ENCODE measurements at regions of chr4 and their contacts with region 1.

Region 1: GRCh38 chr4:42519803-42520417 is 122.6 kb downstream of the SHISA3 start:
- DNase-seq: peak; percentile 68
- ATAC-seq: peak; percentile 70
- H3K4me3 Mint-ChIP-seq: no peak overlapping the region
- H3K27ac Mint-ChIP-seq: no peak overlapping the region
- H3K4me1 Mint-ChIP-seq: peaks cover 8% of the 10 kb centered on the region
- H3K27me3 Mint-ChIP-seq: no peaks in the 10 kb centered on the region
- CTCF ChIP-seq: peak; percentile 78

Region 2: DNA sequence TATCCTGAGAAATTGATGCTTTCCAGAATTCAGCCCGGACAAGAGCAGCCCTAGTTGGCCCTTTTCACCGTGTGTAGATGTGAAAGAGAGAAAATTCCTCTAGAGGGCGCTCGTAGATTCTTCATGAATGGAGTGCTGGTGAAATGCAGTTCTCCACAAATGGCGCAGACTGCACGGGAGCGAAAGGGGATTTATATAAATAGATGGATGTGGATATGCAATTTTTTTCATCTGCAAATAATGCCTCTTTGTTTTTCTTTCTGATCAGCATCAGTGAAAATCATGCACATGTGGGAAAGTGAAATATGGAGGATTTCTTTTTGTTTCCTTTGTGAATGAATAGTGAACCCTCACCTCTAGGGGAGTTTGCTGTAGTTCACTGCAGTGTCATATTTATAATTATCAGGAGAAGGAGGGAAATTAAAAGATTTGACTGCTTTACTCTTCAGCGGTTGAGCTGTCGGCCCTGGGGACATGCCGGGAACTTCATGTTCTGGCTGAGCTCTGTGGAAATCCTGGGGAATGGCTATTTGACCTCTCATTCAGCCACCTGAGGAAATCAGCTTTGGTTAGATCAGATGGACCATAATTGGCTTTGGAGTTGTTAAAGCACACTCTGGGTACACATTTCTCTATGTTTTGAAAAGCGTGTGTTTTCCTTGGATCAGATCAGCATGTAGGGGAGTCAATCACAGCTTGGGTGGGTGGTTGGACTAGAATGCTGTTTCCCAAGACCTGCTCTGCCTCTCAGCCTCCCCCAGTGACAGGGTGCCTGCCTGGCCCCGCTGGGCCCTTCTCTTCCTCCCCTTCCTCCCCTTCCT is 237.6 kb before region 1 on chr4:
- CTCF ChIA-PET with region 1: interaction called, 56 read pairs
- POLR2A ChIA-PET with region 1: no interaction called
- intact Hi-C with region 1: loop called (anchors 5 kb)
- DNase-seq: peak; percentile 52
- ATAC-seq: peak; percentile 68
- H3K4me3 Mint-ChIP-seq: no peak overlapping the region
- H3K27ac Mint-ChIP-seq: no peak overlapping the region
- H3K4me1 Mint-ChIP-seq: peaks cover 8% of the 10 kb centered on the region
- H3K27me3 Mint-ChIP-seq: peaks cover 22% of the 10 kb centered on the region
- CTCF ChIP-seq: peak; percentile 68

Region 3: DNA sequence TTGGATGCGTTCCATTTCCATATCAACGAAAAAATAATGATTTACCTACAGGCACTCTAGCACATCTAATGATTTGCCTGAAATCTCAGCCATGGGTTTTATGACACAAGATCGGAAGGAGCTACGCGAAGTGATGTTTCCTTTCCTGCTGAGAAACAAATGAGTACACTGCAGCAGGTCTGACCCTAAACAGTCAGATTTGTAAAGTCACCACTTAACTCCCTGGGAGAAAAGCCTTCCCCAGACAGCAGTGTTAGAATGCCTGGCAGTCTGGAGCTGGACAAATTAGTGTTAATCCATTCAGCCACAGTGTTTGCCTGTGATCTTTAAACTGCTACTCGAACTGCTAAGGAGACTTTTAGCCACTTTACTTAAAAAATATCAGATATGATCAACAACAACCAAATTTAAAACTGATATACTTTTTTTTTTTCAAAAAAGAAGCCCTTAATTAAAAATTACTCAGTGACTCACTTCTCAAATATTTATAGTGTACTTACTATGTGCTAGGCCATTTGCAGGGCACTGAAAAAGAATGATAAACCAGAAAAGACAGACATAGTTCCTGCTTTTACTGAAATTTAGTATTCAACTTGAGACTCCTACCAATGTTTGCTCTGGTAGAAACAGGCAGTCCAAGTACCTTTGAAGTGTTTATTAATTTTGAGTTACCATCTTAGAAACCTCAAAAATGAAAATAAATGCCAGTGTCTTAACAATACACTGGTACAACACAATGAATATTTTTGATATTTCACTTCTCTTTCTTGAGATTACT is 18.1 kb before region 1 on chr4:
- CTCF ChIA-PET with region 1: interaction called, 12 read pairs
- POLR2A ChIA-PET with region 1: no interaction called
- intact Hi-C with region 1: no loop called
- DNase-seq: no peak
- ATAC-seq: no peak
- H3K4me3 Mint-ChIP-seq: no peak overlapping the region
- H3K27ac Mint-ChIP-seq: no peak overlapping the region
- H3K4me1 Mint-ChIP-seq: no peaks in the 10 kb centered on the region
- H3K27me3 Mint-ChIP-seq: no peaks in the 10 kb centered on the region
- CTCF ChIP-seq: no peak

Measured in activated CD8-positive, alpha-beta T cell treated with anti-CD3 and anti-CD28 coated beads for 36 hours (primary cell).